Activated CD8-positive, alpha-beta T cell treated with anti-CD3 and anti-CD28 coated beads, Interleukin-2, amount 10 ng/mL, durations not matched to agents 7 days and 5 days (primary cell): ENCODE measurements at regions of chr5 and their contacts with region 1.

Region 1: DNA sequence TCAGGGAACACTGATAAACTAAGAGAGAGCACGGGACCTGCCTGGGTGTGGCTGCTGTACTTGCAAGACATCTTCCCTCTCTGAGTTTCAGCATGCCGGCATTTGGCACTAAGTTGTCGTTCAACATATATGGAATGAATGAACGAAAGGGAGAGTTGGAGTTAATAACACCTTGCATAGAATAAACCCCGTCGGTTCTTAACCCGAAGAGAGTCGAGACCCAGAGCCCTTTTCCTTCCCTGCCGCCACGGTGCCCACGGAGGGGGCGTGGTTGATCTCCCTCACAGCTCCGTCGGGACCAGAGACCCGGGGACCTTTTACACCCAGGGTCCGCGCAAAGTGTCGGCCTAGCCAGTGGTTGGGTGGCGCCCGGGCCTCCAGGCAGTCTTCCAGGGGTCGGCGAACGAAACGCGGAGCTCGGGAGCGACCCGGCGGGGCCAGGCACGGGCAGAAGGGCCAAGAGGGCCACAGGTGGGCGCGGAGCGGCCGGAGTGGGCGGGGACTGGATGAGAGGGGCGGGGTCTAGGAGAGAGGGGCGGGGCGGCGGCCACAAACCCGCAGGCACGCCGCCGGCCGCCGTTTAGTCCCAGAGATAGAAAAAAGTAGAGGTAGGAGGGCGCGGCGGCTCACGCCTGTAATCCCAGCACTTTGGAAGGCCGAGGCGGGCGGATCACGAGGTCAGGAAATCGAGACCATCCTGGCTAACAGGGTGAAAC is 735 bp upstream of the RPL26L1 start:
- DNase-seq: peak; percentile 67
- ATAC-seq: peak; percentile 71
- H3K4me3 Mint-ChIP-seq: peak overlapping the region; percentile 92
- H3K27ac Mint-ChIP-seq: peak overlapping the region; percentile 95
- H3K4me1 Mint-ChIP-seq: peaks cover 32% of the 10 kb centered on the region
- H3K27me3 Mint-ChIP-seq: peaks cover 5% of the 10 kb centered on the region

Region 2: GRCh38 chr5:172733131-172733973 is 225.1 kb before region 1 on chr5:
- CTCF ChIA-PET with region 1: no interaction called
- POLR2A ChIA-PET with region 1: no interaction called
- DNase-seq: no peak
- ATAC-seq: no peak
- H3K4me3 Mint-ChIP-seq: no peak overlapping the region
- H3K27ac Mint-ChIP-seq: no peak overlapping the region
- H3K4me1 Mint-ChIP-seq: no peaks in the 10 kb centered on the region
- H3K27me3 Mint-ChIP-seq: peaks cover 2% of the 10 kb centered on the region

Region 3: GRCh38 chr5:172973127-172973916 is 14.8 kb after region 1 on chr5:
- CTCF ChIA-PET with region 1: interaction called, 10 read pairs
- POLR2A ChIA-PET with region 1: interaction called, 3 read pairs
- DNase-seq: no peak
- ATAC-seq: no peak
- H3K4me3 Mint-ChIP-seq: no peak overlapping the region
- H3K27ac Mint-ChIP-seq: no peak overlapping the region
- H3K4me1 Mint-ChIP-seq: no peaks in the 10 kb centered on the region
- H3K27me3 Mint-ChIP-seq: peaks cover 6% of the 10 kb centered on the region

Region 4: DNA sequence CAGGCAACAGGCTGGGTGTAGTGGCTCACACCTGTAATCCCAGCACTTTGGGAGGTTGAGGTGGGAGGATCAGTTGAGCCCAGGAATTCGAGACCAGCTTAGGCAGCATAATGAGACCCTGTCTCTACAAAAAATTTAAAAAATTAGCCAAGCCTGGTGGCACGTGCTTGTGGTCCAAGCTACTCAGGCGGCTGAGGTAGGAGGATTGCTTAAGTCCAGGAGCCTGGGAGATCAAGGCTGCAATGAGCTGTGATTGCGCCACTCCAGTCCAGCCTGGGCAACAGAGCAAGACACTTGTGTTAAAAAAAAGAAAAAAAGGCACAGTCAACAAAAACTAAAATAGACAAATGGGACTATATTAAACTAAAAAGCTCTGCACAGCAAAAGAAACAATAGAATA is 54.4 kb after region 1 on chr5:
- CTCF ChIA-PET with region 1: no interaction called
- POLR2A ChIA-PET with region 1: no interaction called
- DNase-seq: no peak
- ATAC-seq: no peak
- H3K4me3 Mint-ChIP-seq: no peak overlapping the region
- H3K27ac Mint-ChIP-seq: no peak overlapping the region
- H3K4me1 Mint-ChIP-seq: peaks cover 16% of the 10 kb centered on the region
- H3K27me3 Mint-ChIP-seq: no peaks in the 10 kb centered on the region

Region 5: GRCh38 chr5:173089581-173089980 is 131.1 kb after region 1 on chr5:
- CTCF ChIA-PET with region 1: no interaction called
- POLR2A ChIA-PET with region 1: no interaction called
- DNase-seq: no peak
- ATAC-seq: no peak
- H3K4me3 Mint-ChIP-seq: no peak overlapping the region
- H3K27ac Mint-ChIP-seq: no peak overlapping the region
- H3K4me1 Mint-ChIP-seq: no peaks in the 10 kb centered on the region
- H3K27me3 Mint-ChIP-seq: no peaks in the 10 kb centered on the region